Pancreas (tissue), 10 donors: ENCODE measurements at regions of chr15 and their contacts with region 1.

Region 1: GRCh38 chr15:89129123-89129815 is 41.0 kb downstream of the ABHD2 start:
- DNase-seq: peak in 3 of 6 donors; percentile 62 to 75 (median 62)
- ATAC-seq: peak in 3 of 4 donors; percentile 27 to 31 (median 27)
- H3K4me3 ChIP-seq: no peak overlapping the region
- H3K27ac ChIP-seq: peak overlapping the region; percentile 23 to 95 (median 66)
- H3K4me1 ChIP-seq: peaks cover 72 to 90% (median 85%) of the 10 kb centered on the region in 3 donors
- H3K27me3 ChIP-seq: no peaks in the 10 kb centered on the region
- CTCF ChIP-seq: peak in 3 of 4 donors; percentile 26 to 51 (median 49)

Region 2: DNA sequence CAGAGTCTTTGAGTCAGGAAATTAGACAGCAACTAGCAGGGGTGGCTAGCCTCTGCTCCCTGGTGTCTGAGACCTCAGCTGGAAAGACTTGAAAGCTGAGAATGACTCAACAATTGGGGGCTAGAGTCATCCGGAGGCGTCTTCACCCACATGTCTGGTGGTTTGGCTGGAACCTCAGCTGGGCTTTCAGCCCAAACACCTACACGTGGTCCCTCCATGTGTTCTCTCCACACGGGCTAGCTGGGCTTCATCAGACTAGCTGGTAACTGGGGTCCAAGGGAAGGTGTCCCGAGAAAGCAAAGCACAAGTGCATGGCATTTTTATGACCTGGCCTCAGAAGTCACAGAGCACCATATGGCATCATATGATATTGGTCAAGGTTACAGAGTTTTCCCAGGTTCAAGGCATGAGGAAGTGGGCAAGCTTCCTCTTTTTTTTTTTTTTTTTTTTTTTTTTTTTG is 60.9 kb before region 1 on chr15:
- intact Hi-C with region 1: loop called in 1 of 3 experiments (anchors 10 kb)
- DNase-seq: peak in 1 of 6 donors; percentile 36
- ATAC-seq: peak in 2 of 4 donors; percentile 49 to 70
- H3K4me3 ChIP-seq: no peak overlapping the region
- H3K27ac ChIP-seq: no peak overlapping the region
- H3K4me1 ChIP-seq: no peaks in the 10 kb centered on the region
- H3K27me3 ChIP-seq: no peaks in the 10 kb centered on the region
- CTCF ChIP-seq: no peak